Esophagus squamous epithelium (tissue), 5 donors: ENCODE measurements at regions of chr6 and their contacts with region 1.

Region 1: DNA sequence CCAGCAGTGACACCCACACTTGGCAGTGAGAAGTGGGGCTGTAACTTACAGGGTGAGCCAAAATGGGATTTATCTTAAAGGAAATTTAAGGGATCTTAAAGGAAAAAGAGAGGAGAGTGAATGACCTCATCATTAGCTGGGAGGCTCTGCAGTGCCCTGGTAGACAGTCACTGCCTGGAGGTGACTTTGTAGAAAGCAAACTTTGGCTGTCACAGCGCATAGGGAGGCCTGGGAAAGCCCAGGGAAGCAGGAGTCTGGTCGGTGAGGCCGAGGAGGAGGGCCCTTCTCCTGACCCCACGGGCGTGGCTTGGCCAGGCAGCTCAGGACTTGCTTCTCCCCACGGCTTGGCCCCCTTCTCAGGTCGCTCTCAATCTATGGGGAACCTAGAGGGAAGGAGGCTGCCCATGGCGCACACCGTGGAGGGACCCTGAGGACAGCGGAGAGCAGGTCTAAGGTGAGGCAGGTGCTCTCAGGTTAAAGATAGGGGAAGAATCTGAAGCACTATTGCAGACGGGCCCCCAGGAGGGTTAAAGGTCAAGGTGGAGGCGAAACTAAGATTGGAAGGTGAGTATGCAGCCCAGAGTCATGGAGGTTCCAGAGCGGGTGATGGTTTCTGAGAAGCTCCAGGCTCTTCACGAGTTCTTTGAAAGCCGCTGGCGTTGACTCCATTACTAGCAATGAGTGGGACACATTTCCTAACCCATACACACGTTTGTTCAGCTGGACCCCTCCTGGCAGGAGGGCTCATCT is 15.6 kb upstream of the RIPK1 start:
- DNase-seq: no peak
- H3K4me3 ChIP-seq: peak overlapping the region in 2 of 4 donors; percentile 50 to 73
- H3K27ac ChIP-seq: peak overlapping the region in 1 of 4 donors; percentile 80
- H3K4me1 ChIP-seq: peaks cover 4 to 38% (median 22%) of the 10 kb centered on the region in 3 donors
- H3K27me3 ChIP-seq: no peaks in the 10 kb centered on the region
- CTCF ChIP-seq: no peak
- POLR2A ChIP-seq: no peak

Region 2: GRCh38 chr6:2245094-2245876 is 807.4 kb before region 1 on chr6 and contains the start of gene GMDS:
- intact Hi-C with region 1: no loop called
- DNase-seq: peak; percentile 19
- H3K4me3 ChIP-seq: peak within 1 kb of the TSS; percentile 74 to 98 (median 84)
- H3K27ac ChIP-seq: peak within 1 kb of the TSS; percentile 83 to 96 (median 91)
- H3K4me1 ChIP-seq: peaks cover 7 to 30% (median 8%) of the 10 kb centered on the region in 3 donors
- H3K27me3 ChIP-seq: peaks cover 0 to 32% (median 0%) of the 10 kb centered on the region in 4 donors
- CTCF ChIP-seq: no peak
- POLR2A ChIP-seq: peak in 3 of 4 donors; percentile 62 to 96 (median 68)
- total RNA-seq, gene GMDS: 17.9 to 58.7 (median 36.7) TPM

Region 3: DNA sequence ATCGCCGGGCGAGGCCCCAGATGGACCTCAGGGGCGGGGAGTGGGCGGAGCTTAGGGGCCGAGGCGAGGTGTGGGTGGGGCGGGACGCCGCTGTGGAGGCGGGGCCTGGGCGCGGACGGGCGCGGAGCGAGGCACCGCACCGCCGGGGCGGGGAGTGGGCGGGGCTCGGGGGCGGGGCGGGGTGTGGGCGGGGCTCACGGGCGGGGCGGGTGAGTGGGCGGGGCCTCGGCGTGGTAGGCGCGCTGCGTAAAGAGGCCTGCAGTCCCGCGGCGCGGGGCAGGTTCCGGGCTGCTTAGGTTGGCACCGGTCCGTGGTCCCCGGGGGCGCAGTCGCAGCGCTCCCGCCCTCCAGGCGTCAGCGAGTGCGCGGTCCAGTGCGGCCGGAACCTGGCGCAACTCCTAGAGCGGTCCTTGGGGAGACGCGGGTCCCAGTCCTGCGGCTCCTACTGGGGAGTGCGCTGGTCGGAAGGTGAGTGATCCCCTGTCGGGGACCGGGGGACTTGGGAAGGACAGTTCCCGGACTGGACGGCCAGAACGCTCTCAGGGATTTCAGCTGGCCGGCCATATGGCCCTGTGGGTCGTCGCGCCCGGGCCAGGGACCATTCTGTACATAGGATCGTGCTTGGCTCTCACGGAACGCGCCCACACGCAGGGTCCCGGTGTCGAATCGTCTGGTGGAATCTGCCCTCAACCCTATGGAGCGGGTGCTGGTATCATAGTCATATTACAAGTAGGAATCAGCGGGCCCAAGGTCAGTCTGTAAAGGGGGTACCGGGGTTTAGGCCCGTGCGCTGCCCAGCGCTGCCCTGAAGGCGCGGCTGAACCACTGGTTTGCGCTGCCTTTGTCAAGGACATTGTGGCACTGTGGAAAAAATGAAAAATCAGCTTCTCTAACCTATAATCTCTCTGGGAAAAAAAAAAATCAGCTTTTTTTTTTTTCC is 52.8 kb before region 1 on chr6 and contains the start of gene NQO2:
- intact Hi-C with region 1: loop called (anchors 5 kb)
- DNase-seq: peak; percentile 72
- H3K4me3 ChIP-seq: peak within 1 kb of the TSS; percentile 77 to 97 (median 90)
- H3K27ac ChIP-seq: peak within 1 kb of the TSS; percentile 93 to 96 (median 94)
- H3K4me1 ChIP-seq: peaks cover 14 to 36% (median 20%) of the 10 kb centered on the region in 3 donors
- H3K27me3 ChIP-seq: no peaks in the 10 kb centered on the region
- CTCF ChIP-seq: peak in 2 of 6 experiments; percentile 26 to 32
- POLR2A ChIP-seq: peak in 3 of 4 donors; percentile 83 to 96 (median 92)
- total RNA-seq, gene NQO2: 18.7 to 38.3 (median 26.5) TPM

Region 4: DNA sequence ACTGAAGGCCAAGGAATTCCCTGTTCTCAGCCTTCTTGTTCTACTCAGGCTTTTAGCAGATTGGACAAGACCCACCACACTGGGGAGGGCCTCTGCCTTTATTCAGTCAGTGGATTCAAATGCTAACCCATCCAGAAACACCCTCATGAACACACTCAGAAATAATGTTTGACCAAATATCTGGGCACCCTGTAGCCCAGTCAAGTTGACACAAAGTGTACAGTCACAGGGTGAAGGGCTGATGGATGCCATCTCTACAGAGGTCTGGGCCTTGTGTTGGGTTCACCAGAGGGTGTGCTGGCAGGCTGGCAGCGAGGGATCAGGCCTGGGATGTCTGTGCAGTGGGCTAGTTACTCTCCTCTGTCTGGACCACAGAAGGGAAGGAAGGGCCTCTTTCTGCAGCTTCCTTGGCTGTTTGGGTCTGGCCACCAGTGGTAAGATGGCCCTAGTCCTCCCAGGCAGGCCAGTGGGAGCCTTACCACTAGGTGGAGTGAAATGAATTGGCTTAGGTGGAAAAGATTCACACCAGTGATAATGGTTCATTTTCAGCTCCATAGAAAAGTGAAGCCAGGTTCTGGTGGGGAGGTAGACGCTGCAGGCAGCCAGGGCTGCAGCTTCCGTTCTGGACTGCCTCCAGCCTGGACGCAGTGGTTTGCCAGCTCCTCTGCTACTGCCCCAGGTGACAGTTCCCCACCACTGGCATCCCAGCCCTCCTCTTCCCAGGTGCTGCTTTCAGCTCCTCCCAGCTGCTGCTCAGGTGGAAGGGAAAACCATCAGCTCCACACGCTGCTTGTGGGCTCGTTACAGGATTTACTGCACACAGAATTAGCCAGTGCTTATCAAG is 95.5 kb after region 1 on chr6:
- intact Hi-C with region 1: no loop called
- DNase-seq: no peak
- H3K4me3 ChIP-seq: no peak overlapping the region
- H3K27ac ChIP-seq: no peak overlapping the region
- H3K4me1 ChIP-seq: no peaks in the 10 kb centered on the region
- H3K27me3 ChIP-seq: no peaks in the 10 kb centered on the region
- CTCF ChIP-seq: peak in 1 of 6 experiments; percentile 33
- POLR2A ChIP-seq: no peak

Region 5: GRCh38 chr6:3281631-3282475 is 229.2 kb after region 1 on chr6:
- intact Hi-C with region 1: no loop called
- DNase-seq: no peak
- H3K4me3 ChIP-seq: no peak overlapping the region
- H3K27ac ChIP-seq: peak overlapping the region; percentile 42 to 79 (median 69)
- H3K4me1 ChIP-seq: peaks cover 7 to 37% (median 16%) of the 10 kb centered on the region in 3 donors
- H3K27me3 ChIP-seq: no peaks in the 10 kb centered on the region
- CTCF ChIP-seq: no peak
- POLR2A ChIP-seq: no peak